ENCODE measurements at regions of chr6 and their contacts with region 1.

Region 1: GRCh38 chr6:1609648-1610496 is at the start of gene FOXC1:
- DNase-seq: no peak
- ATAC-seq: peak; percentile 83
- H3K4me3 ChIP-seq: peak within 1 kb of the TSS; percentile 72
- H3K27ac ChIP-seq: no peak within 1 kb of the TSS
- H3K4me1 ChIP-seq: peaks cover 10% of the 10 kb centered on the region
- H3K27me3 ChIP-seq: peaks cover 27 to 36% of the 10 kb centered on the region in 2 experiments
- CTCF ChIP-seq: no peak
- EP300 ChIP-seq: no peak
- POLR2A ChIP-seq: peak; percentile 28; the same call in 1 of the 2 replicates
- RAD21 ChIP-seq: no peak
- polyA plus RNA-seq, gene FOXC1: 0.13 to 0.26 TPM

Region 2: DNA sequence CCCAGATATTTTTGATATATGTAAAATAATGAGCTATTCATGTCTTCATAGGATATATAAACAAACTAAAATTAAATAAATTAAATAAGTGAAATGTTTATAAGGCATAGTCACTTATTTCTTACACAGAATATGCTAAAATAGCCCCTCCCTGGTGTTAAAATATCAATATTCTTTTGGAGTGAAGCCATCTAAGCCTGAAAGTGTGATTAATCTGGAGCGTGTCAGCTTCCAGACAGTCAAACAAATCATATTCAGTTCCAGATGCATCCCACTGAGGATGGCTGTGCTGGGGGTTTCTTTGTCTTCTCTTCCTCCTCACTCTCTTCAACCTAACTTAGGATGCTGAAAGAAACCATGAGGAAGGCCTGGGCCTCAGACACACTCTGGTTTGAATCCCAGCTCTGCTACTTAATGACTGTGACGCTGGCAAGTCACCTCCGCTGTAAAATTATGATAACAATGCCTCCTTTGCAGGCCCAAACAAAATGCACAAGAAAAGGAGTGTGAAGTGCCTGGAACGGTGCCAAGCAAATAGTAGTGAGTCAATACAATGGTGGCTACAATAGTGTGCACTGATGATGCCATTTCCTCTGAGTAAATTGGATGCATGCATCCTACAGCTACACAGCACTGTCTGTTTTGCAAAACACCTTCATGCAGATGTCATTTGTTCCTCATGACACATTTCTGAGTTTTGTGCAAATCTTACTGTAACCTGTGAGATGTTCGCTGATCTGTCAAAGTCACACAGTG is 161.3 kb after region 1 on chr6:
- CTCF ChIA-PET with region 1: no interaction called
- POLR2A ChIA-PET with region 1: no interaction called
- RAD21 ChIA-PET with region 1: no interaction called
- SMC1A ChIA-PET with region 1: interaction called, 3 read pairs
- in situ Hi-C with region 1: no loop called
- intact Hi-C with region 1: loop called (anchors 10 kb)
- DNase-seq: no peak
- ATAC-seq: peak; percentile 18; the same call in 1 of the 3 replicates
- H3K4me3 ChIP-seq: no peak overlapping the region
- H3K27ac ChIP-seq: no peak overlapping the region
- H3K4me1 ChIP-seq: peaks cover 14% of the 10 kb centered on the region; the same call in 1 of the 2 replicates
- H3K27me3 ChIP-seq: no peaks in the 10 kb centered on the region
- CTCF ChIP-seq: no peak
- EP300 ChIP-seq: no peak
- POLR2A ChIP-seq: no peak
- RAD21 ChIP-seq: no peak

Region 3: DNA sequence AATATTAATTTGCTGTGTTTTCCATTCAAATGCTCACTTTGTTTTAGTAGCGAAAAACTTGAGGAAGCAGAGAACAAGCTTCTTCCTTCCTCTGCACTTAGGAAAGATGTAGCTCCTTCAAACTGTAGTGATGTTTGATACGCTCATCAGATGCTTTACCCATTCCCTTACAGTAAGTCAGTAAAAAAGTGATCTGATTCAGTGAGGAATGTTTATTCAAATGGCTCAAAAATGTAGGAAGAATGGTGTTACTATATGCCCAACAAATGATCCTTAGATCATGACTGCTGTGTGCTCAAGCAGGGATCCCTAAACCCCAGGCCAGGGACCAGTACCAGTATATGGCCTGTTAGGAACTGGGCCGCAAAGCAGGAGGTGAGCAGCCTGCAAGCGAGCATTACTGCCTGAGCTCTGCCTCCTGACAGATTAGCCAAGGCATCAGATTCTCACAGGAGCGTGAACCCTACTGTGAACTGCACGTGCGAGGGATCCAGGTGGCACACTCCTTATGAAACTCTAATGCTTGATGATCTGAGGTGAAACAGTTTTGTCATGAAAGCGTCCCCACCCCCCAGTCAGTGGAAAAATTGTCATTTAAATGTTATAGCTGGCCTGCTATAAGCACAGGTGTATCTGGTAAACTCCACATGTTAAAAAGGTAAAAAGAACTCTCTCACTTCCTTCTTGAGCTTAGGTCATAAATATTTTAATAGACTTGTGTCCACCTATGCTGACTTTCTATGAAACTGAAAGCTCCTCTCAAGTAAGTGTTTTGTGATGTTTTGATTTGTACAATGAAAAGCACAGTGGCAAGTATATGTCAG is 187.0 kb after region 1 on chr6:
- CTCF ChIA-PET with region 1: no interaction called
- POLR2A ChIA-PET with region 1: no interaction called
- RAD21 ChIA-PET with region 1: no interaction called
- SMC1A ChIA-PET with region 1: no interaction called
- in situ Hi-C with region 1: no loop called
- intact Hi-C with region 1: loop called (anchors 5 kb)
- DNase-seq: no peak
- ATAC-seq: peak; percentile 88
- H3K4me3 ChIP-seq: no peak overlapping the region
- H3K27ac ChIP-seq: peak overlapping the region; percentile 45
- H3K4me1 ChIP-seq: peaks cover 18% of the 10 kb centered on the region
- H3K27me3 ChIP-seq: no peaks in the 10 kb centered on the region
- CTCF ChIP-seq: no peak
- EP300 ChIP-seq: no peak
- POLR2A ChIP-seq: no peak
- RAD21 ChIP-seq: no peak

Region 4: DNA sequence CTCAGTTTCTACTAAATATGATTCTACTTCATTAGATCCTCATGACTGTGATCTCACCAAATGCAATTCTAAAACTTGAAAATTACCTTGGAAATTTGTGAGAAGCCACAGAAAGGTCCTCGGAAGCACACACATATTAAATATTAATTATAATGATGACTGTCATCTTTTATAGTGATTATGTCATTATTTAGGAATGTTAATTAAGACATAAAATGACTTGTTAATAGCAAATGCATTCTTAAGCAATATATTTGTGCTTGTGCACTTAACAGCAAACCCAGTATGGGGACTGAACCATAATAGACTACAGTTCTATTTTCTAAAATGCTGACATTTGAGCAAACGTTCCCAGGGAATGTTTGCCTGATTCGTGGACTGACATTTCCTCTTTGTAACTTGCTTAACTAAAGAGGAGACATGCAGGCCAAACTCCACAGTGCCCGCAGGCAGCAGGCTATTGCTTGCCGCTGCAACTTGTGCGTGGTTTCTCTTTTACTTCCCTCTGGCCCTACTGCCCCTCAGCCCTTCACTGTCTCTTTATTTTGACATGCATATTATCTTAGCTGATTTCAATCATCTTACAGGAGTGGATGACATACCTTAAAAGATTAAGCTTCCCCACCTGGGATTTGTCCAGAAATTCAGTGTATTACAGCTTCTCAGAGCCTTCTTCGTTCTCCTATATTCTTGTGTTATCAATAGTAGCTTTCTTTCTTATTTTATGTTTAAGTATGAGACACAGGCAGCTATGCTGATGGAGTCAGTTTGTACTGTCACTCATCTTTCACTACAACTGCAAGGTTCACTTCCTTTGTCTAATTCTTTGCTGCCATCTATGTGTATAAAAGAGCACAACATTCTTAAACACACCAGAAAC is 494.0 kb after region 1 on chr6:
- CTCF ChIA-PET with region 1: interaction called, 25 read pairs
- POLR2A ChIA-PET with region 1: no interaction called
- RAD21 ChIA-PET with region 1: interaction called, 10 read pairs
- SMC1A ChIA-PET with region 1: interaction called, 16 read pairs
- in situ Hi-C with region 1: no loop called
- intact Hi-C with region 1: no loop called
- DNase-seq: peak; percentile 11
- ATAC-seq: peak; percentile 84
- H3K4me3 ChIP-seq: no peak overlapping the region
- H3K27ac ChIP-seq: no peak overlapping the region
- H3K4me1 ChIP-seq: no peaks in the 10 kb centered on the region
- H3K27me3 ChIP-seq: no peaks in the 10 kb centered on the region
- CTCF ChIP-seq: peak; percentile 43 to 76 (median 56); a peak in 5 of 6 replicates
- EP300 ChIP-seq: no peak
- POLR2A ChIP-seq: no peak
- RAD21 ChIP-seq: peak; percentile 94

Region 5: DNA sequence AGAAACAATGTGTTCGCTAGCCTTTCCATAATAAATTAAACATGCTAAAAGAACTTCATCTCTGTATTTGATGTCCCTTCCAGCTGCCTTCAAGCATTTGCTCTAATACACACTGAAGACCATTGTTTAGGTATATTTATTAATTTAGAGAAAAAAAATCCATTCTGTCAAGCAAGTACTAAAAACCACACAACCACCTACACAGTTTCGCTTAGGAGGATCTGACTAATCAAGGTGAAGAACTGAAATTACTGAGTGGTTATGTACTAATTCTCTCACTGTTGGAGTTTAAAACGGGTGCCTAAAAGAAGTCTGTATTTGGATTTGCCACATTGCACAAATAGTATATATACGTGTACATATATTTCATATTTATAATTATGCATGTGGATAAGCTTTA is 576.6 kb after region 1 on chr6:
- CTCF ChIA-PET with region 1: no interaction called
- POLR2A ChIA-PET with region 1: no interaction called
- RAD21 ChIA-PET with region 1: no interaction called
- SMC1A ChIA-PET with region 1: interaction called, 3 read pairs
- in situ Hi-C with region 1: loop called (anchors 5 kb)
- intact Hi-C with region 1: no loop called
- DNase-seq: peak; percentile 27
- ATAC-seq: peak; percentile 94
- H3K4me3 ChIP-seq: no peak overlapping the region
- H3K27ac ChIP-seq: no peak overlapping the region
- H3K4me1 ChIP-seq: peaks cover 18% of the 10 kb centered on the region
- H3K27me3 ChIP-seq: no peaks in the 10 kb centered on the region
- CTCF ChIP-seq: no peak
- EP300 ChIP-seq: peak; percentile 22 to 82; a peak in 1 of 4 replicates
- POLR2A ChIP-seq: no peak
- RAD21 ChIP-seq: 0 out of 2 replicates have a peak, but pooled peaks have one; percentile 2

Measured in GM12878 (cell line).